GM10248 (cell line): ENCODE measurements at regions of chr16 and their contacts with region 1.

Region 1: DNA sequence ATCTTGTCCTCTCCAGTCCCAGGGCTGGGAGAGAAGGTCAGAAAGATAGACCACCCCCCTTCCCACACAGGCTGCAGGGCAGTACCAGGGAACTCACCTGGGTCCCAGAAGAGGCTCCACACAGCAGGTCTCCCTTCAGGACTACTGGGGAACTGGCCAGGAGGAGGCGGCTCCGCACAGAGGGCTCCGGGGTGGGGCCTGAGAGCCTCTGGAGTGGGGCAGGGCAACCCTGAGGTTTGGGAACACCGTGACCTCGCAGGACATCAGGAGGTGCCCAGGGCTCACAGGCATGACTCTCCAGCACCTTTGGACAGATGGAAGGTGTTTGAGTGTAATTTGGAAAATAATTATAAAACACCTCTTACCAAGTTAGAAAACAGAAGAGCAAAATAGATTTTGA is 11.0 kb downstream of the ABCA3 start:
- DNase-seq: no peak
- CTCF ChIP-seq: no peak

Region 2: GRCh38 chr16:2340564-2341455 is 11.3 kb after region 1 on chr16 and contains the start of gene ABCA3:
- CTCF ChIA-PET with region 1: interaction called, 21 read pairs
- POLR2A ChIA-PET with region 1: no interaction called
- DNase-seq: peak; percentile 100
- CTCF ChIP-seq: peak; percentile 93